ENCODE measurements at regions of chr4 and their contacts with region 1.

Region 1: GRCh38 chr4:128390475-128390996 is 102.9 kb upstream of the PGRMC2 start:
- DNase-seq: no peak

Region 2: DNA sequence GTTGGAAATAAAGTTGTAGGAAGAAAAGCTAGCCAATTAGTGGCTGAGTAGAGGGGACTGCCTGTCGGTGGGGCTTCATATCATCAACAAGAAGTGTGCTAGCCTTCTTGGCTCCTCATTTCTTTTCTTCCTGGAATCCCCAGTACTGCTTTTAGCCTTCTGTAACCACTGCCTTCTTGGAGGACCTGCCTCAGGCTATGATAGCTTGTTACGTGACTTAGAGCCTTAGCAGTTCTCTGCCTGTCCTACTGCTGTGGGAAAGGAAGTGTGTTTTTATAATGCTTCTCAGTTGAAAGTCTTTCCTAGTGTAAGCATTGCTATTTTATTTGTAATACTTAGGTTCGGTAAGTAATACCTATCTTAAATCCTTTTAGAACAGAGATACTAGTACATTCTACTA is 267.5 kb before region 1 on chr4:
- intact Hi-C with region 1: no loop called
- DNase-seq: no peak

Region 3: DNA sequence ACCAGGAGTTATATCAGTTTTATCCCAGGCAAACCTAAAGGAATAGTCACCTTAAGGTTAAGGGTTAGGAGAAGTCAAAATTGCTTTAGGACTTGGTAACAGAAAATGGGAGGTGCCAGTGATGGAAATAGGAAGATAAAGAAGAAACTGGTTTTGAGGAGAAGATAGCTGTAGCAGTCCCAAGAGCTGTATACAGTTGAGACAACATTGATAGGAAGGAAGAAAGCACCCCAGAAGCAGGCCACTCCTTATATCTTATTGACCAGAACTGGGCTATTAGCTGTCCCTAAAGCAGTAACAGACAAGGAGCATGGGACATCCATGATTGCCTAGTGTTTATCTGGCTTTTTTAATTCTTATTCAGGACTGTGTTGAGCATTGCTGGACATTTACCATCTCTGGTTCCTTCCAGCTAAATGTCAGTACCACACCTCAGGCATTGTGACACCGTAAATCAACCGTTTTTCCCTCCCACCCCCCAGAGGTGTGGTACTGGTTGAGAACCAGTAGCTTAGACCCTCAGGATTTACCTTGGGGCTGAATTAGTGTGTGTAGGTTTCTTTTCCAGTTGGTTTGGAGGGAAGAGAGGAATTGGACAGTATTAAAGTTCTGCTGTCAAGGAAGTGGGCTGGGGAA is 100.9 kb before region 1 on chr4:
- intact Hi-C with region 1: loop called (anchors 2 kb)
- DNase-seq: no peak

Region 4: GRCh38 chr4:129403848-129404247 is 1013.3 kb after region 1 on chr4:
- intact Hi-C with region 1: no loop called
- DNase-seq: no peak

Measured in head of caudate nucleus (tissue), 42 donors.